Lower leg skin (tissue), 4 donors: ENCODE measurements at regions of chr4 and their contacts with region 1.

Region 1: DNA sequence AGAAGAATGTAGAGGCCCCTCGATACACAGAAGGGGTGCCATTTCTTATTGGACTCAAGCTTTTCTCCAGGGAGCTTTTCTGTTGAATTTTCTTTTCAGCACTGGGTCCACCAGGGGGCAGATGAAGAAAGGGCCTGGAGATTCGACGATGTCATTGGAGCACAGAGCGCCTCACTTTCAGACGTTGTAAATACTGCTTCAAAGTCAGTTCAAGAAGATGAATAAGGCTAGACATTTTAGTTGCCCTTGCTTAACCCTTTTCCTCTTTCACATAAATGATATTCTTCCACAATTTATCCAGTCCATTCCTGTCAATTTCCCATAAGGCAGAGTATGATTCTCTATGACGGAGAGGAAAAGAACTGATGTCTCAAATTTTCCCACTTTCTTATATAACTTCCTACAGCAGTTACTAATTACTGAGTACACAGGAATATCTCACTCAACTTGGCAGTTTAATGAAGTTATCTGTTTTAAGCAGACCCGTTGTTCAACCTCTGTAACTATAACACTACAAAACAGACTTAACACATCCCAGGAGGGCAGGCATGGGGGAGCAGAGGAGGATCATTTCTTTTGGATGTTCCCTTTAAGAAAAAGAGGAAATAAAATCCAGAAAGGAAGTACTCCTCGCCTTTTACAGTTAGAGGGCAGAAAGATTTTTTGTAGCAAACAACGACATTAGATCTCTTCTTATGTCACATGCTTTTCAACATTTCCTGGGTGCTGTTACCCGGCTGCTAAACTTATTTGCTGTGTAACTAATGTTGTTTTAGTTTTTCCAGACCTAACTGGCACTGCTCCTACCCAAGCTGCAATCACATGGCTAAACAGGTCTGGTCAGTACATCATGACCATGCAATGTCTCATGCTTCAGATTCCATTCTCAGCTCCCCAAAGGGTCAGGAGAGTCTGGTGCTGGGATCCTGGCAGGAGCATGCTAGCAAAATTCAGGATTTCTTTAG is 12.2 kb upstream of the CENPU start:
- DNase-seq: peak; percentile 81 to 92
- H3K4me3 ChIP-seq: no peak overlapping the region
- CTCF ChIP-seq: peak in 1 of 3 donors; percentile 76
- POLR2A ChIP-seq: no peak

Region 2: GRCh38 chr4:182823576-182823975 is 1922.5 kb before region 1 on chr4:
- intact Hi-C with region 1: loop called (anchors 5 kb)
- DNase-seq: no peak
- H3K4me3 ChIP-seq: no peak overlapping the region
- CTCF ChIP-seq: no peak
- POLR2A ChIP-seq: no peak

Region 3: DNA sequence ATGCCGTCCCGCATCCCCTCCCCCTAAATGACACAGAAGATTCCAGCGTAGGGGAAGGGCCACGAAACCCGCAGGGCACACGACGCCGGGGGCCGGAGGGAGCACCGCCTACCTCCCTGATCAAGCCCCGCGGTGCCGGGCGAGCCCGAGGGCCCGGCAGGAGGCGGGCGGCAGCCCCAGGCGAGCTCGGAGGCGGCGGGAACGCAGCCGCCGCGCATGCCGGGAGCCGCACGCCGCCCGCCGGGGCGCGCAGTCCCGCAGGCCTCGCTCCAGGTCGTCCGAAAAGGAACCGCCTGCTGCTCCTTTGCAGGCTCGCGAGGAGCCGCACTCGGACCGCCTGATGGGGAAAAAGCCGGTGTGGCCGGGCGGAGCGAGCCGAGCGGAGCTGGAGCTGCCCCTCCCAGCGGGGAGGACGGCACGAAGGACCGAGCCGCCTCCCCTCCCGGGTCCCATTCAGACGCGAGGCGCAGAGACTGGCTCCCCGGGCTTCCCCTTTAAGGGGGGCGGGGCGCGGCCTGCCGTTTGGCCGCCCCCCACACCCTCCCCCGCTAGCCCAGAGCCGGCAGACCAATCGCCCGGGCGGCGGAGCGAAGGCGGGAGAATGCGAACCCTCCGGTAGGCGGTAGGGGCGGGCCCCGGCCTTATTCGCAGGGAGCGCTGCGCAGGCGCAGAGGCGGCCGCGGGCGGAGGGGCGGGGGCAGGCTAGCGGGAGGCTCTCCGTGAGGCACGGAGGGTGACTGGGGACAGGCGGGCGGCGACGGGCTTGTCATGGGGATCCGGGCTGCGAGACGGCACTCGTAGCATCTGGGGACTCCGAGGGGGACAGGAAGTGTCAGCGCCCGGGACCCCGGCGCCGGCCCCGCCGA is 1241.8 kb before region 1 on chr4:
- intact Hi-C with region 1: no loop called
- DNase-seq: peak; percentile 98 to 100
- H3K4me3 ChIP-seq: peak overlapping the region; percentile 100
- CTCF ChIP-seq: no peak
- POLR2A ChIP-seq: no peak

Region 4: GRCh38 chr4:184907216-184907615 is 161.1 kb after region 1 on chr4:
- intact Hi-C with region 1: loop called (anchors 5 kb)
- DNase-seq: no peak
- H3K4me3 ChIP-seq: no peak overlapping the region
- CTCF ChIP-seq: no peak
- POLR2A ChIP-seq: no peak